ENCODE measurements at regions of chr10 and their contacts with region 1.

Region 1: GRCh38 chr10:15901889-15902288 is 41.6 kb upstream of the MINDY3 start:
- DNase-seq: no peak
- ATAC-seq: no peak
- H3K4me3 ChIP-seq: no peak overlapping the region
- H3K27ac ChIP-seq: no peak overlapping the region
- H3K4me1 ChIP-seq: peaks cover 0 to 3% of the 10 kb centered on the region in 2 experiments; a peak in 1 of 5 replicates
- H3K27me3 ChIP-seq: no peaks in the 10 kb centered on the region; a peak in 1 of 5 replicates
- CTCF ChIP-seq: no peak
- EP300 ChIP-seq: no peak
- POLR2A ChIP-seq: no peak
- RAD21 ChIP-seq: no peak

Region 2: GRCh38 chr10:16116404-16117304 is 214.8 kb after region 1 on chr10:
- CTCF ChIA-PET with region 1: no interaction called
- POLR2A ChIA-PET with region 1: no interaction called
- in situ Hi-C with region 1: no loop called
- intact Hi-C with region 1: loop called (anchors 2 kb)
- DNase-seq: peak; percentile 15 to 28 (median 26)
- ATAC-seq: peak; percentile 61; the same call in 1 of the 3 replicates
- H3K4me3 ChIP-seq: no peak overlapping the region
- H3K27ac ChIP-seq: no peak overlapping the region
- H3K4me1 ChIP-seq: no peaks in the 10 kb centered on the region
- H3K27me3 ChIP-seq: no peaks in the 10 kb centered on the region
- CTCF ChIP-seq: peak; percentile 50 to 58 (median 56)
- EP300 ChIP-seq: no peak
- POLR2A ChIP-seq: no peak
- RAD21 ChIP-seq: peak; percentile 37 to 58; a peak in 3 of 4 replicates

Region 3: DNA sequence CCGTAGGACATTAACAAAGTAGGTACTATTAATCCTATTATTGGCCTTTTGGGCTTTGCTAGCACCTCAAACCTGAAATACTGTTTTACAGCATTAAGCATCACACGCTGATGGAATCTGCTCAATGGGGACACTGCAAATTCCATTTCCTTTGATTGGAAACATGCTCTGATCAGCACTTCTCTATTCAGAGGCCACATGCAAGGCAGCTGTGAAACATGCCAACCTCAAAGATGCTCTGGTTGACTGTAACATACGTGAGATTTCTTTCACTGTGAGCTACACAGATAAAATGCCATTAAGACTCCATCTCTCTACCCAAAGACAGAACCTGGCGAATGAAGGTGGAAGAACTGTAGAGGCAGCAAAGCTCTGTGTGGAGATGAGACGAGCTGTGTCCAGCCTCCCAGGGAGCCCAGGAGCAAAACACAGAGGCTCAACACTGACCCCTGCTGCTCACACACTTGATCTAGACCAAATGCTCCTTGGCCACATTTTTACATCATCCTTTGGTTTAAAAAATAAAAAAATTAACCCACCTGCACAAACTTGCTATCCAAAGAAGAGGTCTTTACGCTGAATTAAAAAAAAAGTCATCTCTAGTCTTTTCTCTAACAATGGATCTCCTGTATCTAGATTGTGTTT is 907.3 kb after region 1 on chr10:
- CTCF ChIA-PET with region 1: no interaction called
- POLR2A ChIA-PET with region 1: no interaction called
- in situ Hi-C with region 1: loop called (anchors 25 kb)
- intact Hi-C with region 1: loop called (anchors 2 kb)
- DNase-seq: peak; percentile 47 to 72 (median 54)
- ATAC-seq: peak; percentile 95
- H3K4me3 ChIP-seq: no peak overlapping the region
- H3K27ac ChIP-seq: no peak overlapping the region
- H3K4me1 ChIP-seq: no peaks in the 10 kb centered on the region
- H3K27me3 ChIP-seq: no peaks in the 10 kb centered on the region
- CTCF ChIP-seq: peak; percentile 67 to 76 (median 71)
- EP300 ChIP-seq: no peak
- POLR2A ChIP-seq: no peak
- RAD21 ChIP-seq: peak; percentile 36 to 60; a peak in 3 of 4 replicates